Left lung (tissue), 14 donors: ENCODE measurements at regions of chr19 and their contacts with region 1.

Region 1: DNA sequence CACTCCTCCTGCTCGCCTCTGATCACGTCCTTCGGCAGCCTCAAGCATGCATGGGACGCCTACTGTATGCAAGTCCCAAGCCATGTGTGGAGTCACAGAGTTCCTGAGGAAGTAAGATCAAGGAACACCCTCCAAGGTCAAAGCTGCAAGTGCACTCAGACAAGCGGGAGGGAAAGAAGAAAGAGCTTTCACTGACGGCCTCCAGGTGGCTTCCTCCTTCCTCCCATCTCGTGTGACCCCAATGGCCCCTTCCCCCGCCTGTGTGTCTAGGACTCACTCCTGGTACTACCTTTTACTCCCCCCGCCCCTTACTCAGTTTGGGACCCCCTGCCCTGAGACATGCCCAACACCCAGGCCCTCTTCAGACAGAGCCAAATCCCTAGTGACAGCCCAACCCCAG is 6.0 kb downstream of the HAUS8 start:
- DNase-seq: peak in 1 of 4 donors; percentile 20
- ATAC-seq: no peak
- H3K4me3 ChIP-seq: no peak overlapping the region
- H3K27ac ChIP-seq: no peak overlapping the region
- H3K4me1 ChIP-seq: peaks cover 4 to 25% of the 10 kb centered on the region in 2 donors
- H3K27me3 ChIP-seq: no peaks in the 10 kb centered on the region
- CTCF ChIP-seq: no peak

Region 2: GRCh38 chr19:17275461-17276175 is 206.4 kb after region 1 on chr19:
- intact Hi-C with region 1: loop called (anchors 5 to 10 kb)
- DNase-seq: no peak
- ATAC-seq: no peak
- H3K4me3 ChIP-seq: no peak overlapping the region
- H3K27ac ChIP-seq: no peak overlapping the region
- H3K4me1 ChIP-seq: no peaks in the 10 kb centered on the region
- H3K27me3 ChIP-seq: peaks cover 0 to 1% of the 10 kb centered on the region in 2 donors
- CTCF ChIP-seq: no peak

Region 3: DNA sequence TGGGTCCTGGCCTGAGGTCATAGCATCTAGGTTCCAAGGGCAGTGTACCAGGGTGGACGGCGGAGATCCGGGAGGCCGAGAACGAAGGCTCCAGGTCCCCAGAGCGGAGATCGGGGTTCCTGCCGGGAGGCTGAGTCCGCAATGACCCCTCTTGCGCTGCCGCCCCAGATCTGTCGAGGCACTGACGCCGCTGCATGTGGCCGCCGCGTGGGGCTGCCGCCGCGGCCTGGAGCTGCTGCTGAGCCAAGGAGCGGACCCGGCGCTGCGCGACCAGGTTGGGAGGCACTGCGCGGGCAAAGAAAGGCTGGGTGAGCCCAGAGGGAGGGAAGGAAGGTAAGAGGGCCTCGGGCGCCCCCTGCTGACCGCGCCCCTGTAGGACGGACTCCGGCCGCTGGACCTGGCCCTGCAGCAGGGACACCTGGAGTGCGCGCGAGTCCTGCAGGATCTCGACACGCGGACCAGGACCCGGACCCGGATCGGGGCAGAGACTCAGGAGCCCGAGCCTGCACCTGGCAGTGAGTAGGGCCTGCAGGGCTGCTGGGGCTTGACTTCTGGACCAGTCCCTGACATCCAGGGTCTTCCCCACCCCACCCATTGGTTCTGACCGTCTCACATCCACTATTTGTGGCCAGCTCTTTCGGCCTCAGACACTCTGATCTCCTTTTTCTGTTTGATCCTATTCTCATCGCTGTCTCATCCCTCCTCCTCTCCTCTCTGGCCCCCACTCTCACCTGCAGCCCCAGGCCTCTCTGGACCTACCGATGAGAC is 213.5 kb after region 1 on chr19:
- intact Hi-C with region 1: loop called (anchors 5 to 10 kb)
- DNase-seq: peak; percentile 68 to 97 (median 87)
- ATAC-seq: peak; percentile 99
- H3K4me3 ChIP-seq: peak overlapping the region; percentile 16 to 51
- H3K27ac ChIP-seq: no peak overlapping the region
- H3K4me1 ChIP-seq: peaks cover 11 to 24% of the 10 kb centered on the region in 2 donors
- H3K27me3 ChIP-seq: peaks cover 0 to 25% of the 10 kb centered on the region in 2 donors
- CTCF ChIP-seq: peak; percentile 94 to 98